Posterior vena cava (tissue), 2 donors: ENCODE measurements at regions of chr4 and their contacts with region 1.

Region 1: DNA sequence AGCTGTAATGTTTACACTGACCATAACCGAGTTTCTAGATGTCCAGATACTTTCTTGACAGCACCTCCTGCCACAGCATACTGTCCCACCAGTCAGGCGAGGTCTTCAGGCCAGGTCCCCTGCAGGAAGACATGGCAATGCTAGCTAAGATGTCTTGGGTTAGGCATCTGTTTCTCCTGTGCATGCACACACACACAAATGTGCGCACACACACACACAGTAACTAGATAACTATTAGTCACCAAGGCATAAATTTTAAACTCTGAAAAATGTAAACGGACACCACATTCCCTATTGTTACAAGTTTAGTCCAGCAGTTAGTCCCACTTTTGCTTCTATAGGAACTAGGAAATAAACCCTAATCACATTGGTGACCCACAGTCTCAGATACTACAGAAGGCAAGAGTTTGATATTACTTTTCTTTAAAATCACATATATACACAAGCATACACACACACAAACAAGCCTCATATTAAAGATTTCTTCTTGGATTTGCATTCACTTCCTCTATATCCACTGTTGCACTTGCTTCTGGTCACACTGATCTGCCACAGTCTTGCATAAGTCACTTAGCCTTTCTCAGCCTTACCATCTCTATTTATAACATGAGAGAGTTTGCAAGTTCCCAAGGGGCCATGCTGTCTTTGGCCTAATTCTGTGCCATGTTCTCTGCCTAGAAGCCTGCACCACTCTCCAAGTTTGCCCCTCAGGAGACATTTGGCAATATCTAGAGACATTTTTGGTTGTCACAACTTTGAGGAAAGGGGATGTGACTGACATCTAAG is 32.2 kb downstream of the IL21 start:
- DNase-seq: no peak

Region 2: DNA sequence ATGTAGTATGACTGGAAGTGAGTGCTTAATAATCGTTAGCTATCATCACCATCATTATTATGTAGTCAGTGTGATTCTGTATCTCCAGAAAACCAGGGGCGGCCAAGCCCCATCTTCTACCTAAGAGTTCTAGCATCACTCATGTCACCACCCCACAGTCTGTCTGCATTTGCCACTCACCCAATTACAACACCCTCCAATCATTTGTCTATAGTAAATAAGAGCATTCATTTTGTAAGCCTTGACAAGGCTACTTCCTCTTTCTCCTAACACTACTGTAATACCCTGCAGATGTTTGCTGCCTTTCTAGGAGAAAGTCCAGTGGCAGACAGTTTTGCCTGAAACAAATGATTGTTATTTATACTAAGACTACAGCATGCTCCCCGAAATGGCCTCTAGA is 48.1 kb after region 1 on chr4:
- intact Hi-C with region 1: loop called in 1 of 2 experiments (anchors 1 kb)
- DNase-seq: no peak